ENCODE measurements at regions of chr17 and their contacts with region 1.

Region 1: DNA sequence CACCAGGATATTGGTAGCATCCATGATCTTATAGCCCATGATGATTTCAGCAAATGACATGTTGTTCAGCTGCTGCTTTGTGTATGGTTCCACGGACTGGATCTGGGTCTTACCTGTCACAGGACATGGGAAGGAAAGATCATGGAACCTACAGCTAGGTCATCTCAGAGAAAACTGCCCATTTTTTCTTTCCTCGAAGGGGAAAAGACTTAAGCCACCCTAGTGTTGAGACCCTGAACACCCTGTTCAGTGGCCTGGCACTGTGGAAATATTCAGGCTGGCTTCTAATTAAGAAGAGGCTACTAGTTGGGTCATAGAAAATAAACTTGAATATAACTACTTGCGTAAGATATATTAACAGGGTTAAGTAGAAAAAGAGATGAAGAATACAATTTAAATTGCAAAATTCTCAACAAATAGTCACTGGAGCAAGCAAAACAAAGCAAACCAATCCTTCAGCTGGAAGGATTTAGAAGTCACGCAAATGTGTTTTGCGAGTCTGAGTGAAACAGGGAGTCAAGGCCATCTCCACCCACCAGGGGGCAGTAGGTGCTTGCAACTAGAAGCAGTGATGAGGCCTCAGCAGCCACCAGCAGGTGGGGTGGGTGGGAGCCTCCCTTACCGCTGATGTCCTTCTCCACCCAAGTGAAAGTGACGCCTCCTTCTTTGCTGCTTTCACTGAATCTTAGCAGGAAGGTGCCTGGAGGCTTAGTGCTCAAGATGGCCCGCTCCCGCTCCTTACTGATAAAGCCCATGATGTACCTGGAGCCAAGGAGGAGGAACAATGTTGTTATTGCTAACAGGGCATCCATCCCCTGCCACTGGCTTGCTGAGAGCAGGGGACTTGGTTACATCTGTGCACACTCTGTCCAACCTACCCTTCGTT is 34.3 kb downstream of the STAT5A start:
- DNase-seq: peak; percentile 88
- H3K4me3 Mint-ChIP-seq: no peak overlapping the region
- H3K27ac Mint-ChIP-seq: no peak overlapping the region
- H3K4me1 Mint-ChIP-seq: peaks cover 34% of the 10 kb centered on the region
- H3K27me3 Mint-ChIP-seq: no peaks in the 10 kb centered on the region

Region 2: GRCh38 chr17:42276359-42276608 is 46.3 kb before region 1 on chr17 and contains the start of gene STAT5B:
- intact Hi-C with region 1: no loop called
- DNase-seq: peak; percentile 71
- H3K4me3 Mint-ChIP-seq: peak within 1 kb of the TSS; percentile 94
- H3K27ac Mint-ChIP-seq: peak within 1 kb of the TSS; percentile 93
- H3K4me1 Mint-ChIP-seq: peaks cover 39% of the 10 kb centered on the region
- H3K27me3 Mint-ChIP-seq: no peaks in the 10 kb centered on the region
- total RNA-seq, gene STAT5B: 162 and 164 TPM in 2 replicates

Region 3: GRCh38 chr17:42312285-42313130 is 10.1 kb before region 1 on chr17:
- intact Hi-C with region 1: no loop called
- DNase-seq: peak; percentile 72
- H3K4me3 Mint-ChIP-seq: peak overlapping the region; percentile 33
- H3K27ac Mint-ChIP-seq: peak overlapping the region; percentile 68
- H3K4me1 Mint-ChIP-seq: peaks cover 59% of the 10 kb centered on the region
- H3K27me3 Mint-ChIP-seq: no peaks in the 10 kb centered on the region

Region 4: GRCh38 chr17:42347198-42347597 is 24.6 kb after region 1 on chr17:
- intact Hi-C with region 1: no loop called
- DNase-seq: no peak
- H3K4me3 Mint-ChIP-seq: no peak overlapping the region
- H3K27ac Mint-ChIP-seq: peak overlapping the region; percentile 34
- H3K4me1 Mint-ChIP-seq: peaks cover 46% of the 10 kb centered on the region
- H3K27me3 Mint-ChIP-seq: no peaks in the 10 kb centered on the region

Region 5: GRCh38 chr17:42388381-42389134 is 65.9 kb after region 1 on chr17 and contains the start of gene STAT3:
- intact Hi-C with region 1: loop called (anchors 5 kb)
- DNase-seq: peak; percentile 100
- H3K4me3 Mint-ChIP-seq: peak within 1 kb of the TSS; percentile 91
- H3K27ac Mint-ChIP-seq: peak within 1 kb of the TSS; percentile 100
- H3K4me1 Mint-ChIP-seq: peaks cover 39% of the 10 kb centered on the region
- H3K27me3 Mint-ChIP-seq: no peaks in the 10 kb centered on the region
- total RNA-seq, gene STAT3: 250 and 262 TPM in 2 replicates

Measured in activated T-helper 2 cell treated with anti-CD3 and anti-CD28 coated beads, Interferon-gamma antibody, Interleukin-2, Interleukin-4, amounts not matched to agents 10 μg/mL and 5 μg/mL and 100 μg/mL, durations not matched to agents 14 hours and 24 hours and 36 hours (primary cell).